Activated CD8-positive, alpha-beta memory T cell treated with anti-CD3 and anti-CD28 coated beads, Interleukin-2, amount 10 ng/mL, durations not matched to agents 7 days and 5 days (primary cell): ENCODE measurements at regions of chr19 and their contacts with region 1.

Region 1: DNA sequence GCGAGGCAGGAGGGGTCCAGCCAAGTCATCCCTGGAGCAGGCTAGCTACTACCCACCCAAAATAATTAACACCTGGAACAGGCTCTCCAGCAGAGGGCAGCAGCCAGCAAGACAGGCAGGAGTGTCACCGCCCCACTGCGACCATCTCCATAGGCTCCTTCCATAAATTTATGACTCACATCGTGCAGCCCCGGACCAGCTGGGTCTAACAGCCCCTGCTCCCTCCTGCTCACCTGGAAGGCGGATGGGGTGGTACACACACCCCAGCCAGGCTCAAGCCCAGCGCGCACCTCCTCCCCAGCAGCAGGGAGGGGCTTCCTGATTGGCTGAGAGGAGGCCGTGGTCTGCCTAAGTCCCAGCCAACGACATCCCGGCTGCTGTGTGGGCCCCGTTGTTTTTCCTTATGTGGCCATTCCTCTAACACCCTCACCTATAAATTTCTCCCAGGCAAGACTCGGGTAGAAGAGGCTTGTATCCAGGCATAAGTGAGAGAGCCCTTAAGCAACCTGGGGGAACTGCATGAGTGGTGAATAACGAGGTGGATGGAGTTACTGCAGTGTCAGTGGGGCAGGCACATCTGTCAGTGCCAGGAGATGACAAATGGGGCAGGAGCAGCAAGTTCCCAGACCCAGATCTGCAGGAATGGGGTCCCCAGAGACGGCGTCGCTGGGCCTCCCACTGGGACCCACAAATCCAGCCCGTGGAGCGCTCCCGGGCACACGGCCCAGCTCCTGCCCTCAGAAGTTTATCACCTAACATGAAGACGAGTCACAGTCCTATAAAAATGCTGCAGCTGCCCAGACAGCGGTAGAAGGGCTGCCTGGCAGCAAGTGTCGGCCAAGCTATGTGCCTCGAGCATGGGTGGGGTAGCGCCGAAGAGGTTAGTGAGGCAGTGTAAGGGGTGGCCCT is 43.1 kb downstream of the CEBPG start:
- DNase-seq: peak; percentile 79
- ATAC-seq: peak; percentile 79
- H3K4me3 Mint-ChIP-seq: no peak overlapping the region
- H3K27ac Mint-ChIP-seq: no peak overlapping the region
- H3K4me1 Mint-ChIP-seq: peaks cover 4% of the 10 kb centered on the region
- H3K27me3 Mint-ChIP-seq: no peaks in the 10 kb centered on the region

Region 2: DNA sequence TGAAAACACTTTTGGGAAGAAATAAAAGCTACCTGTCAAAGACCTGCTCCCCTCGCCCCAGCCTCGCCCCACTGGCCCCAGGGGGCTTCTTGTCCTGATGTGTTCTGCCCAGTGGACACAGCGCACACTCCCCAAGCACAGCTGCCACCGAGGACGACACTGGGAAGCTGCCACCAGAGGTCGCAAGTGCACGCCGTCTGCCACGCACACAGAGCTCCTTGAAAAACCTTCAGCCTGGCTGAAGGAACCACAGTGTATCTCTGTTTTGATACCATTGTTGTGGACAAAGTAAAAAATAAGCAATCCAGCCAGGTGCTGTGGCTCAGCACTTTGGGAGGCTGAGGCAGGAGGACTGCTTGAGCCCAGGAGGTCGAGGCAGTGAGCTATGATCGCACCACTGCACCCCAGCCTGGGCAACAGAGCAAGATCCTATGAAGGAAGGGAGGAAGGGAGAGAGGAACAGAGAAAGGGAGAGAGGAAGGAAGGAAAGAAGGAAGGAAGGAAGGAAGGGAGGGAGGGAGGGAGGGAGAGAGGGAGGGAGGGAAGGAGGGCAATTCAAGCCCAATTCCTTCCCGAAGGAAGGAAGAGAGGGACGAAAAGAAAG is 14.2 kb after region 1 on chr19:
- CTCF ChIA-PET with region 1: interaction called, 10 read pairs
- DNase-seq: peak; percentile 69
- ATAC-seq: peak; percentile 86
- H3K4me3 Mint-ChIP-seq: no peak overlapping the region
- H3K27ac Mint-ChIP-seq: no peak overlapping the region
- H3K4me1 Mint-ChIP-seq: peaks cover 4% of the 10 kb centered on the region
- H3K27me3 Mint-ChIP-seq: peaks cover 3% of the 10 kb centered on the region

Region 3: GRCh38 chr19:33654840-33655508 is 238.4 kb after region 1 on chr19:
- CTCF ChIA-PET with region 1: no interaction called
- DNase-seq: no peak
- ATAC-seq: no peak
- H3K4me3 Mint-ChIP-seq: no peak overlapping the region
- H3K27ac Mint-ChIP-seq: no peak overlapping the region
- H3K4me1 Mint-ChIP-seq: no peaks in the 10 kb centered on the region
- H3K27me3 Mint-ChIP-seq: peaks cover 11% of the 10 kb centered on the region

Region 4: GRCh38 chr19:33771384-33772101 is 355.0 kb after region 1 on chr19:
- CTCF ChIA-PET with region 1: interaction called, 22 read pairs
- DNase-seq: peak; percentile 73
- ATAC-seq: peak; percentile 72
- H3K4me3 Mint-ChIP-seq: no peak overlapping the region
- H3K27ac Mint-ChIP-seq: no peak overlapping the region
- H3K4me1 Mint-ChIP-seq: no peaks in the 10 kb centered on the region
- H3K27me3 Mint-ChIP-seq: no peaks in the 10 kb centered on the region